ENCODE measurements at regions of chr6 and their contacts with region 1.

Region 1: GRCh38 chr6:140078561-140079125 is 704.2 kb upstream of the CITED2 start:
- DNase-seq: no peak

Region 2: GRCh38 chr6:139981768-139982181 is 96.9 kb before region 1 on chr6:
- intact Hi-C with region 1: loop called (anchors 10 kb)
- DNase-seq: no peak

Region 3: GRCh38 chr6:140660295-140660694 is 581.7 kb after region 1 on chr6:
- intact Hi-C with region 1: no loop called
- DNase-seq: no peak

Measured in posterior vena cava (tissue), 2 donors.